ENCODE measurements at regions of chr11 and their contacts with region 1.

Region 1: GRCh38 chr11:125214571-125215565 is 50.3 kb downstream of the PKNOX2 start:
- DNase-seq: no peak
- ATAC-seq: no peak
- H3K4me3 ChIP-seq: no peak overlapping the region
- H3K27ac ChIP-seq: peak overlapping the region; percentile 51
- H3K4me1 ChIP-seq: peaks cover 35% of the 10 kb centered on the region
- H3K27me3 ChIP-seq: no peaks in the 10 kb centered on the region
- CTCF ChIP-seq: no peak

Region 2: GRCh38 chr11:125170510-125171031 is 44.3 kb before region 1 on chr11:
- intact Hi-C with region 1: loop called (anchors 5 kb)
- DNase-seq: peak; percentile 58 to 76
- ATAC-seq: peak in 3 of 4 donors; percentile 17 to 38 (median 25)
- H3K4me3 ChIP-seq: peak overlapping the region; percentile 37
- H3K27ac ChIP-seq: peak overlapping the region; percentile 89
- H3K4me1 ChIP-seq: peaks cover 51% of the 10 kb centered on the region
- H3K27me3 ChIP-seq: no peaks in the 10 kb centered on the region
- CTCF ChIP-seq: no peak

Region 3: DNA sequence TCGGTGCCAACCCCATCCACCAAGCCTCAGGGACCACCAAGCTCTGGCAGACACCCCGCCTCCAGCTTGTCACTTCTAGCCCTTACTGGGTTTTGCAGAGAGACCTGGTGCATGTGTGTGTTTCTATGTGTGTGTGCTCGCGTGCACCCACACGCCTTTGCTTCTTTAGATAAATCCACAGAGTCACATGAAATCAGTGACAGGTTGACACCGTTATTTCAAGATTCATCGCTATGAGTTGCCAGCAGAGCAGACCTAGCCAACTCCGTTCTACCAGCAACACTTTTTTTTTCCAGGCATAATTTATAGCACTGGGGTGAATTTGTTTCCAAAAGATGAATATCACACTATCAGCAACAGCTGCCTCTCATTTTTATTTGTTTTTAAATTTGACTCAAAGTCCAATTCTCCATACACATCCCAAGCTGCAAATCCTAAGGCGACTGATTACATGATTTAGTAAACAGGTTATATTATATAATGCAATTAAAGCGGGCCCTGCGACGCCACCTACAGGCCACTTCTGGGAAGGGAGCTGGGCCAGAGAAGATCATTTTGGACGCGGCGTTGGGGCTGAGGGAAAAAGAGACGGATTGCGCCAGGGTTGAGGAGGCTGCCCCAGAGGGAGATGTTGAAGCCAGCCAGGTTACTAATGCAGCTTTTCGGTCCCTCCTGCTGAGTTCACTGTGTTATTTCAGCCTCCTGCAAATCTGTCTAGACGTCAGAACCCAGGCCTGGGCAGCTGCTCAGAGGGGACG is 130.7 kb after region 1 on chr11:
- intact Hi-C with region 1: loop called in 1 of 2 experiments (anchors 5 kb)
- DNase-seq: peak; percentile 84 to 93
- ATAC-seq: peak; percentile 86 to 93 (median 88)
- H3K4me3 ChIP-seq: peak overlapping the region; percentile 2
- H3K27ac ChIP-seq: peak overlapping the region; percentile 67
- H3K4me1 ChIP-seq: peaks cover 41% of the 10 kb centered on the region
- H3K27me3 ChIP-seq: no peaks in the 10 kb centered on the region
- CTCF ChIP-seq: peak; percentile 91